Activated T-helper 1 cell treated with anti-CD3 and anti-CD28 coated beads, Interleukin-12 subunit alpha, Interleukin-12 subunit beta, Interleukin-2, Interleukin-4 antibody, amounts not matched to agents 30 ng/mL and 10 ng/mL and 1 ng/mL, durations not matched to agents 14 hours and 24 hours and 36 hours (primary cell): ENCODE measurements at regions of chr9 and their contacts with region 1.

Region 1: GRCh38 chr9:124202447-124202971 is 55.2 kb upstream of the NEK6 start:
- DNase-seq: peak; percentile 71
- H3K4me3 Mint-ChIP-seq: peak overlapping the region; percentile 58
- H3K27ac Mint-ChIP-seq: peak overlapping the region; percentile 95
- H3K4me1 Mint-ChIP-seq: peaks cover 69% of the 10 kb centered on the region
- H3K27me3 Mint-ChIP-seq: peaks cover 2% of the 10 kb centered on the region

Region 2: DNA sequence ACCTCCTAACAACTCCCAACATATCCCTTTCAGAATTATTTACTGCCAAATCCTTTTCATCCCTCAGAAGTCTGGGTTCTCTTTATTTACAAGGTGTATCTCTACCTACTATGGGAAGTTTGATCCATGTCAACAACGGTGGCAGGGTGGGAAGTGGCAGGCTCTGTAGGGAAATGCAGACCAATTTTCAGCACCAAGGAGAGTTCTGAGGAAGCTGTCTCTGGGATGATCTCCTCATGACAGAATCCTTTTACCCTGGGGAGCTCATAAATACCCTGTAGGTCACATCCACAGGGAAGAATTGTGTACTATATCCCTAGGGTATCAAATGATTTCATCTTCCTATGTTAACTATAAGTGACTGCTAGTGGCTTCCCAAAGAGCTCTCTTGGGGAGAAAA is 52.5 kb before region 1 on chr9:
- intact Hi-C with region 1: no loop called
- DNase-seq: no peak
- H3K4me3 Mint-ChIP-seq: no peak overlapping the region
- H3K27ac Mint-ChIP-seq: no peak overlapping the region
- H3K4me1 Mint-ChIP-seq: peaks cover 9% of the 10 kb centered on the region
- H3K27me3 Mint-ChIP-seq: peaks cover 28% of the 10 kb centered on the region

Region 3: GRCh38 chr9:124239249-124240073 is 37.0 kb after region 1 on chr9:
- intact Hi-C with region 1: loop called (anchors 2 kb)
- DNase-seq: no peak
- H3K4me3 Mint-ChIP-seq: peak overlapping the region; percentile 6
- H3K27ac Mint-ChIP-seq: peak overlapping the region; percentile 61
- H3K4me1 Mint-ChIP-seq: peaks cover 53% of the 10 kb centered on the region
- H3K27me3 Mint-ChIP-seq: peaks cover 16% of the 10 kb centered on the region

Region 4: GRCh38 chr9:124285903-124286291 is 83.4 kb after region 1 on chr9:
- intact Hi-C with region 1: loop called (anchors 1 kb)
- DNase-seq: no peak
- H3K4me3 Mint-ChIP-seq: peak overlapping the region; percentile 67
- H3K27ac Mint-ChIP-seq: peak overlapping the region; percentile 85
- H3K4me1 Mint-ChIP-seq: peaks cover 21% of the 10 kb centered on the region
- H3K27me3 Mint-ChIP-seq: no peaks in the 10 kb centered on the region